Left ventricle myocardium inferior (tissue), 1 donor: ENCODE measurements at regions of chr3 and their contacts with region 1.

Region 1: DNA sequence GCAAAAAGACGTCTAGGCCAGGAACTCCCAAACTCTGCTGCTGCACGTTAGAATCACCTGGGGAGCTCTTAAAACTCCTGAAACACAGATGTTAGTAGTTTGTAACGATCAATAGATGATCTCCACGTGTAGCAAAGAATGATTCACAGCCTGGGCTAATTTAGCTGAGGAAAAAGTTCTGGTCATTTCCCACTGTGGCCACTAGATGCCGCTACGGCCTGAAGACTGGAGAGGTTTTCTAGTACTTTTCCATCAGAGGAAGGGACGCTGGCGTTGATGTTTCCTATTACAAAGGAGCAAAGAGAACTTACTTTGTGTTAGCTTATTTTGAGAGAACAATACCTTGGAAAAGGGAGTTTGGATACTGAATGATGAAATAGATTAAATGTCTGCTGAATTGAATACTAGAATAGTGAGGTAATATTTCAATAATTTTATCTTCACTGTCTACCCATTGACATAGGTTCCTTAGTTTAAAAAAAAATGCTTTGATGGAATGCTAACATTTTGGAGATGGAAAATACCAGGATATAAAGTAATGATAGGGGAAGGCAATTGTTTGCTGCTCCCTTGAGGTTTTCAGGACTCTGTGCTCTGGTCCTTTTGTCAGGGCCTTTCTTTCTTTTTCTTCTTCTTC is 159.1 kb downstream of the P3H2 start:
- DNase-seq: peak; percentile 63
- H3K4me3 ChIP-seq: no peak overlapping the region
- H3K27ac ChIP-seq: no peak overlapping the region
- H3K4me1 ChIP-seq: peaks cover 6% of the 10 kb centered on the region
- H3K27me3 ChIP-seq: peaks cover 22% of the 10 kb centered on the region
- CTCF ChIP-seq: peak; percentile 94

Region 2: DNA sequence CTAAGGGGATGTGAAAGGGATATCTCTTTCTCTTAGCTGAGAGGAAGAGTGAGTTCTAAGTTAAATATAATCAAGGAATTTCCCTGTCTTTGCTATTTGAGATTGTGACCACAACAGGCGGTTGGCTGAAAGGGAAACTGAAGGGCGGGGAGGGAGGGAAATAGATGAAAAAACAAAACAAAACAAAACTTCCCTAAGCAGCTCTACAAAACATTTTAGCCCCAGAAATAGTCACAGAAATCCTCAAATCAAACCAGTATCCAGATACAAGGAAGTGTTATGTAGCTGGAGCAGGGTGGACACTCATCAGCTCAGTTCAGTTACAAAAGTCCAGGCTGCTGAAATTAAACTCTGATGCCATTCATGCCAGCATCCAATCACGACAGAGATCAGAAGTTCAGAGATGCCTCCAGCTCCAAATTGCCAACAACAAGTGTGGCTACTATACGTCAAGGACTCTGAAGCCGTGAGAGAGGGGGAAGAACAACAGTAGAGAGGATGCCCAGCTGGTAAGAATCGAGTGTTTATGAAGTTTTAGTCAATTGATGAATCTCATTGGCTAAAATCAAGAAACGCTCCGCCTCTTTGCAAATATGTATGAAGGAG is 330.8 kb before region 1 on chr3:
- intact Hi-C with region 1: no loop called
- DNase-seq: no peak
- H3K4me3 ChIP-seq: peak overlapping the region; percentile 56
- H3K27ac ChIP-seq: peak overlapping the region; percentile 59
- H3K4me1 ChIP-seq: peaks cover 22% of the 10 kb centered on the region
- H3K27me3 ChIP-seq: no peaks in the 10 kb centered on the region
- CTCF ChIP-seq: no peak

Region 3: DNA sequence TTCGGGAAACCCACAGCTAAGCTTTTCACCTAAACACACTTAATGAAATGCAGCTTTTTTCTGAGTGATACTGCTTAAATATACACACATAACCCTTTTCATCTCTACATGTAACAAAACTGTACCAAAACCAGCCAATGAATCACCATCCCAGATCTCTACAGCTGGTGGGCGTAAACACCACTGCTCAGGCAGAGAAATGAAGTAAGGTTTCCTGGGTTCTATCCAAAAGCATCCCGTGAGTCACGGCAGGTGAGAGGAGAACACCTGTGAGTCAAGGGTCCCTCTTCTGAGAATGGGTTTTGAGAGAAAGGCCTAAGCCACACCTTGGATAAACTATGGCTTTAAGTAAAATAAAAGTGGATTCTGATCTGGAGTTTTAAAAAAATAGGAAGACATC is 358.0 kb after region 1 on chr3:
- intact Hi-C with region 1: loop called (anchors 10 kb)
- DNase-seq: no peak
- H3K4me3 ChIP-seq: no peak overlapping the region
- H3K27ac ChIP-seq: no peak overlapping the region
- H3K4me1 ChIP-seq: peaks cover 17% of the 10 kb centered on the region
- H3K27me3 ChIP-seq: peaks cover 34% of the 10 kb centered on the region
- CTCF ChIP-seq: no peak

Region 4: GRCh38 chr3:190424478-190425439 is 463.1 kb after region 1 on chr3:
- intact Hi-C with region 1: loop called (anchors 10 kb)
- DNase-seq: peak; percentile 24
- H3K4me3 ChIP-seq: no peak overlapping the region
- H3K27ac ChIP-seq: no peak overlapping the region
- H3K4me1 ChIP-seq: no peaks in the 10 kb centered on the region
- H3K27me3 ChIP-seq: no peaks in the 10 kb centered on the region
- CTCF ChIP-seq: peak; percentile 73